Activated naive CD4-positive, alpha-beta T cell treated with anti-CD3 and anti-CD28 coated beads for 36 hours (primary cell): ENCODE measurements at regions of chrX and their contacts with region 1.

Region 1: GRCh38 chrX:38327007-38327774 is at the start of gene RPGR:
- DNase-seq: peak; percentile 93
- H3K4me3 Mint-ChIP-seq: peak within 1 kb of the TSS; percentile 89
- H3K27ac Mint-ChIP-seq: peak within 1 kb of the TSS; percentile 75
- H3K4me1 Mint-ChIP-seq: peaks cover 13% of the 10 kb centered on the region
- H3K27me3 Mint-ChIP-seq: no peaks in the 10 kb centered on the region
- total RNA-seq, gene RPGR: 6.5 to 7.4 TPM

Region 2: DNA sequence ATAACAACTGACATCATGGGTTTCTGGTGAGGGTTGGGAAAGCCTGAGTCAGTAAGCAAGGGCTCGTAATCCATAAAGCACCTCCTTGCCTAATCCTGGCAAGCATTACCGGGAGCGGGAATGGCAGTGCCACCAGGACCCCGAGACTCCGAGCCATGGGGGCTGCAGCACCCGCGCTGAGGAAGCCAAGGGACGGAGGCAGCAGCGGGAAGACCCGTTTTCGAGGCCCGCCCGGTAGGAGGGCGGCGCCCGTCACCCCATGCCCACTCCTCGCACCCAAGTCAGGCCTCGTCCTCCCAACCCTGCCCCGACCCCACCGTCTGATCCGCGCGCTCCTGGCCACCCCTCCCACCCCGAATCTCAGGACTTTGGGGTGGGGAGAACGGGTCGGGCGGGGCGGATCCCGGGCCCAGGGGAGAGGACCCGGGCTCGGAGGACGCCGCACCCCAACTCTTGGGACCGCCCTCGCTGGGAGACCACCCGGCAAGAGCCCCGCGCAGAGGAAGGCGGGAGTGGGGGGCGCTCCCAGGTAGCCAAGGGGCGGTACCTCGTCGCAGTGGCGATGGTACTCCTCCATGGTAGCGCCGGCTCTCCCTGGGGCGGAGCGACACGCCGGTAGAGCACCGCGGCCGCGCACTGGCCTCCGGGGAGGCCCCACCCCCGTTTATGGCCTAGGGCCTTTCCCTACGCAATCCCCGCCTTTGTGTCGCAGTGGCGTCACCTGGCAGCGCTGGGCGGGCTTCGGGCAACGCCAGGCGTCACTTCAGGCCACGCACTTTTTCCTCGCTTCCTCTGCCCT is 480.1 kb before region 1 on chrX and contains the start of gene DYNLT3:
- CTCF ChIA-PET with region 1: no interaction called
- intact Hi-C with region 1: loop called (anchors 2 kb)
- DNase-seq: peak; percentile 83
- H3K4me3 Mint-ChIP-seq: peak within 1 kb of the TSS; percentile 72
- H3K27ac Mint-ChIP-seq: peak within 1 kb of the TSS; percentile 81
- H3K4me1 Mint-ChIP-seq: peaks cover 19% of the 10 kb centered on the region
- H3K27me3 Mint-ChIP-seq: no peaks in the 10 kb centered on the region
- total RNA-seq, gene DYNLT3: 11.8 to 14.4 TPM

Region 3: DNA sequence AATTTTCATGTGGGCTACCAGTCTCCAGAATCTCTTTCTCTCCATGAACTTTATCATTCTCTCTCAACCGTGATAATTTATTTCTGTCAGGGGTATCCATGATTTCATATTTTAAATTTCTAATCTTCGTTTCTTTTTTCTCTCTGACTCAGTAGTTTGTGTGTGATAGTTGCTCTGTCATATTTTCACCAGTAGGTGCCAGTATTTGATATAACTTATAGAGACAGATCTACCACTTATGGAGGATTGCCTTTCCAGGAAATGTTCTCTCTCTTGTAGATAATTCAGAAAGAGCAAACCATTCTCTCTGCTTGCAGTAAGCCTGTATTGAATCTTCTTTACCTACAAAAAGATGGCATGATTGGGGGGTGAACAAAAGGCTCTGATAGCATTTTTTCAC is 400.5 kb before region 1 on chrX:
- CTCF ChIA-PET with region 1: no interaction called
- intact Hi-C with region 1: loop called (anchors 1 kb)
- DNase-seq: no peak
- H3K4me3 Mint-ChIP-seq: no peak overlapping the region
- H3K27ac Mint-ChIP-seq: no peak overlapping the region
- H3K4me1 Mint-ChIP-seq: no peaks in the 10 kb centered on the region
- H3K27me3 Mint-ChIP-seq: peaks cover 4% of the 10 kb centered on the region

Region 4: GRCh38 chrX:38192007-38192810 is 135.0 kb before region 1 on chrX:
- CTCF ChIA-PET with region 1: interaction called, 4 read pairs
- intact Hi-C with region 1: loop called (anchors 1 kb)
- DNase-seq: no peak
- H3K4me3 Mint-ChIP-seq: no peak overlapping the region
- H3K27ac Mint-ChIP-seq: no peak overlapping the region
- H3K4me1 Mint-ChIP-seq: no peaks in the 10 kb centered on the region
- H3K27me3 Mint-ChIP-seq: peaks cover 8% of the 10 kb centered on the region

Region 5: DNA sequence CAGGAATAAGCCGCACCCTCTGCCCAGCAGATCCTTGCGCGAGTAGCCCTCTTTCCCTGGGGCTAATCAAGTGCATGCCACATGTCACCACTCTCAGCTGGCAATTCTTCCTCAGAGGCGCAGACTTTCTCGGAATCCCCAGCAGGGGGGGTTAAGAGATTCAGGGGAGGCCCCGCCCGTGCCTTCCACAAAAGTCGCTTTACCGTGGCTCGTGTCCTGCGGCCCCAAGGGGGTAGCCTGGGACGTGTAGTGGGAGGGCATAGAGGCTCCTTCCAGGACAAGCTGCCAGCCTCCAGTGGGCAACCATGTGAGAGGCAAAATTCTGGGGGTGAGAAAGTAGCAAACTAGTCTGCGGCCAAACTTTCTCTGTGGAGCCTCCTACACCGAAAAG is 107.2 kb before region 1 on chrX:
- CTCF ChIA-PET with region 1: interaction called, 8 read pairs
- intact Hi-C with region 1: loop called (anchors 1 kb)
- DNase-seq: peak; percentile 35
- H3K4me3 Mint-ChIP-seq: peak overlapping the region; percentile 24
- H3K27ac Mint-ChIP-seq: no peak overlapping the region
- H3K4me1 Mint-ChIP-seq: no peaks in the 10 kb centered on the region
- H3K27me3 Mint-ChIP-seq: peaks cover 22% of the 10 kb centered on the region

Region 6: DNA sequence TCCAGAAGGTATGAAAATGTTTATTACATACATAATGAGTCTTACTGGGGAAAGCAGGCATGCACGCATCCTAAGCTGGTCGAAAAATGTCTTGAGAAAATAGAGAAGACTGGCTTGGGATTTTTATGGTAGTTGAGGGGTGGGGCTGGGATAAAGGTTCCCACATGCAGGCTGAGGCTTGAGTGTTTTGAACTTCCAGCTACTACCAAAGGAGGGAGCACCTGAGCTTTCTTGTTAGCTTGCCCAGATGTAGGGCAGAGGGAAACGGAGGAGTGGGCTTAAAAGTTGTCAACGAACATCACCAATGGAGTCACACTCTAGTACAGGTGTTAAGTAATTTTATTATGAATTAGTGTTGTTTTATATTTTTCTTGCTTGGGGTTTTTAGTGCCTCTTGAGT is 67.0 kb before region 1 on chrX:
- CTCF ChIA-PET with region 1: no interaction called
- intact Hi-C with region 1: loop called (anchors 2 kb)
- DNase-seq: peak; percentile 6
- H3K4me3 Mint-ChIP-seq: no peak overlapping the region
- H3K27ac Mint-ChIP-seq: no peak overlapping the region
- H3K4me1 Mint-ChIP-seq: no peaks in the 10 kb centered on the region
- H3K27me3 Mint-ChIP-seq: no peaks in the 10 kb centered on the region

Region 7: GRCh38 chrX:38561126-38561868 is 234.1 kb after region 1 on chrX and contains the start of gene TSPAN7:
- CTCF ChIA-PET with region 1: no interaction called
- intact Hi-C with region 1: loop called (anchors 1 kb)
- DNase-seq: peak; percentile 80
- H3K4me3 Mint-ChIP-seq: peak within 1 kb of the TSS; percentile 79
- H3K27ac Mint-ChIP-seq: no peak within 1 kb of the TSS
- H3K4me1 Mint-ChIP-seq: no peaks in the 10 kb centered on the region
- H3K27me3 Mint-ChIP-seq: no peaks in the 10 kb centered on the region
- total RNA-seq, gene TSPAN7: 1.8 to 1.9 TPM

Region 8: DNA sequence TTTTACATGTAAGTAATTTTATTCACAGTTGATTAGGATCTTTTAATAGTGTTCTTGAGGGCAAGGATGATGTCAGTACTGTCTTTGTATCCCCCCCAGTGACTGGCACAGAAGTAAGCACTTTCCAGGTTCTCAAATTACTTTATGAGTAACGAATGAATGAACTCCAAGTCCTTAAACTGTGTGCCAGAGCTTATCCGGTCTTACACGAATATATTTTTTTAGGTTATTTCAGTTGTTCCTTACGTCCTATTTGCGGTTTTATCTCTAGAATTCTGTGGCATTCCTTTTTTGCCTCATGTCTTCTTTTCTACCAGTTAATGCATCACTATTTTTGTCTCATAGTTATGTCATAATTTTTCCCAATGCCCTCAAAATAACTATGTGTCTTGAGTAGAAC is 367.2 kb after region 1 on chrX:
- CTCF ChIA-PET with region 1: no interaction called
- intact Hi-C with region 1: no loop called
- DNase-seq: no peak
- H3K4me3 Mint-ChIP-seq: no peak overlapping the region
- H3K27ac Mint-ChIP-seq: no peak overlapping the region
- H3K4me1 Mint-ChIP-seq: peaks cover 5% of the 10 kb centered on the region
- H3K27me3 Mint-ChIP-seq: no peaks in the 10 kb centered on the region